ENCODE measurements at regions of chr19 and their contacts with region 1.

Region 1: GRCh38 chr19:37594304-37594981 is at the starts of genes ZNF540 and ZNF571:
- DNase-seq: peak; percentile 96 to 98
- ATAC-seq: peak; percentile 99
- H3K4me3 ChIP-seq: peak within 1 kb of the TSS; percentile 75 to 76
- H3K27ac ChIP-seq: peak within 1 kb of the TSS in 1 of 2 donors; percentile 65
- H3K4me1 ChIP-seq: no peaks in the 10 kb centered on the region
- H3K27me3 ChIP-seq: no peaks in the 10 kb centered on the region
- total RNA-seq, gene ZNF540: 6.6 to 10.2 TPM
- total RNA-seq, gene ZNF571: 6.5 to 7.8 TPM

Region 2: DNA sequence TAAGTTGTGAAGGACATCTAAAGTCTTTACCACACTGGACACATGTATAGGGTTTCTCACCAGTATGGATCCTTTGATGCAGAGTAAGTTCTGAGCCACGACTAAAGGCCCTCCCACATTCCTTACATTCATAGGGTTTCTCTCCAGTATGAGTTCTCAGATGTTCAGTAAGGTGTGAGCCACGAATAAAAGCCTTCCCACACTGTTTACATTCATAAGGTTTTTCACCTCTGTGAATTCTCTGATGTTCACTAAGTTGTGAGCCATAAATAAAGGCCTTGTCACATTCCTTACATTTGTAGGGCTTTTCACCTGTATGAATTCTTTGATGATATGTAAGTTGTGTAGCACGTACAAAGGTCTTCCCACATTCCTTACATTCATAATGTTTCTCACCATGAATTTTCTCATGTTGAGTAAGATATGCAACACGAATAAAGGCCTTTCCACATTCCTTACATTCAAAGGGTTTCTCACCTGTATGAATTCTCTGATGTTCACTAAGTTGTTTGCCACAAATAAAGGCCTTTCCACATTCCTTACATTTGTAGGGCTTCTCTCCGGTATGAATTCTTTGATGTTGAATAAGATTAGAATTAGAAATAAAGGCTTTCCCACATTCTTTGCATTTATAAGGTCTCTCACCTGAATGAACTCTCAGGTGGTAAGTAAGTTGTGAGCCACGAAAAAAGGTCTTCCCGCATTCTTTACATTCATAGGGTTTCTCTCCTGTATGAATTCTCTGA is 29.6 kb before region 1 on chr19:
- intact Hi-C with region 1: no loop called
- DNase-seq: no peak
- ATAC-seq: no peak
- H3K4me3 ChIP-seq: no peak overlapping the region
- H3K27ac ChIP-seq: no peak overlapping the region
- H3K4me1 ChIP-seq: no peaks in the 10 kb centered on the region
- H3K27me3 ChIP-seq: no peaks in the 10 kb centered on the region

Region 3: GRCh38 chr19:37655689-37656371 is 61.4 kb after region 1 on chr19:
- intact Hi-C with region 1: loop called (anchors 2 to 10 kb)
- DNase-seq: peak; percentile 89 to 94
- ATAC-seq: peak; percentile 92
- H3K4me3 ChIP-seq: peak overlapping the region; percentile 59 to 82
- H3K27ac ChIP-seq: peak overlapping the region; percentile 36 to 55
- H3K4me1 ChIP-seq: no peaks in the 10 kb centered on the region
- H3K27me3 ChIP-seq: no peaks in the 10 kb centered on the region

Measured in aorta (tissue), 5 donors.